GM12878 (cell line): ENCODE measurements at regions of chr1 and their contacts with region 1.

Region 1: GRCh38 chr1:111516005-111516535 is 12.6 kb upstream of the ADORA3 start:
- DNase-seq: no peak
- ATAC-seq: peak; percentile 42
- H3K4me3 ChIP-seq: peak overlapping the region; percentile 45; the same call in 1 of the 2 replicates
- H3K27ac ChIP-seq: peak overlapping the region; percentile 33
- H3K4me1 ChIP-seq: peaks cover 36% of the 10 kb centered on the region
- H3K27me3 ChIP-seq: no peaks in the 10 kb centered on the region; a peak in 1 of 4 replicates
- CTCF ChIP-seq: peak; percentile 12 to 50 (median 34); a peak in 5 of 6 replicates
- EP300 ChIP-seq: no peak
- POLR2A ChIP-seq: no peak
- RAD21 ChIP-seq: no peak

Region 2: GRCh38 chr1:111372336-111372965 is 143.6 kb before region 1 on chr1:
- CTCF ChIA-PET with region 1: no interaction called
- POLR2A ChIA-PET with region 1: no interaction called
- RAD21 ChIA-PET with region 1: no interaction called
- SMC1A ChIA-PET with region 1: no interaction called
- in situ Hi-C with region 1: no loop called
- intact Hi-C with region 1: no loop called
- DNase-seq: no peak
- ATAC-seq: no peak
- H3K4me3 ChIP-seq: no peak overlapping the region
- H3K27ac ChIP-seq: no peak overlapping the region
- H3K4me1 ChIP-seq: no peaks in the 10 kb centered on the region
- H3K27me3 ChIP-seq: peaks cover 2 to 4% of the 10 kb centered on the region in 2 experiments; a peak in 2 of 4 replicates
- CTCF ChIP-seq: no peak
- EP300 ChIP-seq: no peak
- POLR2A ChIP-seq: no peak
- RAD21 ChIP-seq: no peak

Region 3: GRCh38 chr1:111399792-111400610 is 116.1 kb before region 1 on chr1:
- CTCF ChIA-PET with region 1: no interaction called
- POLR2A ChIA-PET with region 1: no interaction called
- RAD21 ChIA-PET with region 1: no interaction called
- SMC1A ChIA-PET with region 1: no interaction called
- in situ Hi-C with region 1: no loop called
- intact Hi-C with region 1: no loop called
- DNase-seq: peak; percentile 15
- ATAC-seq: peak; percentile 44; the same call in 2 of the 3 replicates
- H3K4me3 ChIP-seq: no peak overlapping the region
- H3K27ac ChIP-seq: no peak overlapping the region
- H3K4me1 ChIP-seq: no peaks in the 10 kb centered on the region
- H3K27me3 ChIP-seq: no peaks in the 10 kb centered on the region
- CTCF ChIP-seq: peak; percentile 60 to 64 (median 60)
- EP300 ChIP-seq: no peak
- POLR2A ChIP-seq: no peak
- RAD21 ChIP-seq: peak; percentile 86

Region 4: DNA sequence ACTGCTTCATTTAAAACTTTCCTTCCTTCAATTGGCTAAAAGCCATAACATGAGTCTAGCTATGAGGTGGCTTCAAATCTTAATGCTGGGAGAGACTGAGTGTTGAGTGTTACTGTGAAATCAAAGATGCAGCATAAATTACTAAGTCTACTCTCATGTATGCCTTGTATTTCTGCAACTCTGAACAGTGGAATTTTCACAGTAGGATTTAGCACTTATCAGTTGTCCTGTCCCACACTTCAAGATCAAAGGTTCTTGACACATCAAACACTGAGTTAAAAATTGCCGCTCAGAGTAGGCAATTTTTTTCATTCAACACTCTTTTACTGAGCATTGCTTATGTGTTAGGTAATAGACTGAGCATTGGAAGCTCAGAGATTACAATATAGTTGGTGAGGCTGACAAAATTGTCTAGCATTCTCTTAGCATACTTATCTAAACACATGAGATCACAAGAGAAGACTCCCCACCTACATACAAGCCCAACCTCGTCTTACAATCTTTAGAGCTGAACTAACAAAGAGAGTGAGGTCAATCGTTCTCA is 43.7 kb after region 1 on chr1:
- CTCF ChIA-PET with region 1: no interaction called
- POLR2A ChIA-PET with region 1: no interaction called
- RAD21 ChIA-PET with region 1: no interaction called
- SMC1A ChIA-PET with region 1: no interaction called
- in situ Hi-C with region 1: no loop called
- intact Hi-C with region 1: loop called (anchors 5 kb)
- DNase-seq: no peak
- ATAC-seq: no peak
- H3K4me3 ChIP-seq: no peak overlapping the region
- H3K27ac ChIP-seq: no peak overlapping the region
- H3K4me1 ChIP-seq: no peaks in the 10 kb centered on the region
- H3K27me3 ChIP-seq: no peaks in the 10 kb centered on the region
- CTCF ChIP-seq: no peak
- EP300 ChIP-seq: no peak
- POLR2A ChIP-seq: no peak
- RAD21 ChIP-seq: no peak